ENCODE measurements at regions of chr14 and their contacts with region 1.

Region 1: GRCh38 chr14:51219473-51220448 is 20.3 kb upstream of the TMX1 start:
- DNase-seq: no peak
- ATAC-seq: no peak
- H3K4me3 Mint-ChIP-seq: no peak overlapping the region
- H3K27ac Mint-ChIP-seq: no peak overlapping the region
- H3K4me1 Mint-ChIP-seq: no peaks in the 10 kb centered on the region
- H3K27me3 Mint-ChIP-seq: peaks cover 3% of the 10 kb centered on the region
- CTCF ChIP-seq: peak; percentile 35

Region 2: GRCh38 chr14:50954811-50955372 is 264.9 kb before region 1 on chr14:
- CTCF ChIA-PET with region 1: interaction called, 6 read pairs
- POLR2A ChIA-PET with region 1: no interaction called
- intact Hi-C with region 1: loop called (anchors 1 kb)
- DNase-seq: no peak
- ATAC-seq: peak; percentile 31
- H3K4me3 Mint-ChIP-seq: no peak overlapping the region
- H3K27ac Mint-ChIP-seq: no peak overlapping the region
- H3K4me1 Mint-ChIP-seq: no peaks in the 10 kb centered on the region
- H3K27me3 Mint-ChIP-seq: no peaks in the 10 kb centered on the region
- CTCF ChIP-seq: no peak

Region 3: DNA sequence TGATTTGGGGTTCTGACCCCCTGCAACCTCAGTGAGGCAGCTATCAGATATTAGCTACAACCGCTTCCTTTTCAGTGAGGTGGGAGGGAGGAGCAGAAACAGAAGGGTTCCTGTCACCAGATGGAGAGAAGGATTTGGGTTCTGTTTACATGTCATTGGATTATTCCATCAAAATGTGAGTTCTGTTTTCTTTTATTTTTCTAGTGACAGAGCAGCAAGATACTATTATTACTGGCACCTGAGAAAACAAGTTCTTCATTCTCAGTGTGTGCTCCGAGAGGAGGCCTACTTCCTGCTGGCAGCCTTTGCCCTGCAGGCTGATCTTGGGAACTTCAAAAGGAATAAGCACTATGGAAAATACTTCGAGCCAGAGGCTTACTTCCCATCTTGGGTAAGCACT is 484.8 kb after region 1 on chr14:
- CTCF ChIA-PET with region 1: no interaction called
- POLR2A ChIA-PET with region 1: no interaction called
- intact Hi-C with region 1: no loop called
- DNase-seq: no peak
- ATAC-seq: no peak
- H3K4me3 Mint-ChIP-seq: no peak overlapping the region
- H3K27ac Mint-ChIP-seq: no peak overlapping the region
- H3K4me1 Mint-ChIP-seq: no peaks in the 10 kb centered on the region
- H3K27me3 Mint-ChIP-seq: no peaks in the 10 kb centered on the region
- CTCF ChIP-seq: no peak